PC-9 (cell line): ENCODE measurements at regions of chr4 and their contacts with region 1.

Region 1: GRCh38 chr4:781493-782216 is 44.3 kb downstream of the CPLX1 start:
- DNase-seq: peak; percentile 97 to 100
- H3K4me3 ChIP-seq: peak overlapping the region; percentile 90
- H3K27ac ChIP-seq: peak overlapping the region; percentile 92
- H3K4me1 ChIP-seq: peaks cover 24% of the 10 kb centered on the region
- H3K27me3 ChIP-seq: no peaks in the 10 kb centered on the region
- CTCF ChIP-seq: no peak

Region 2: GRCh38 chr4:828641-829271 is 47.1 kb after region 1 on chr4:
- CTCF ChIA-PET with region 1: no interaction called
- POLR2A ChIA-PET with region 1: interaction called, 11 read pairs
- intact Hi-C with region 1: loop called (anchors 10 kb)
- DNase-seq: peak in 1 of 2 experiments; percentile 21
- H3K4me3 ChIP-seq: no peak overlapping the region
- H3K27ac ChIP-seq: no peak overlapping the region
- H3K4me1 ChIP-seq: no peaks in the 10 kb centered on the region
- H3K27me3 ChIP-seq: peaks cover 6% of the 10 kb centered on the region; the same call in 1 of the 2 replicates
- CTCF ChIP-seq: 0 out of 2 replicates have a peak, but pooled peaks have one; percentile 36

Region 3: GRCh38 chr4:835148-836002 is 53.7 kb after region 1 on chr4:
- CTCF ChIA-PET with region 1: no interaction called
- POLR2A ChIA-PET with region 1: no interaction called
- intact Hi-C with region 1: loop called (anchors 10 kb)
- DNase-seq: peak; percentile 48 to 82
- H3K4me3 ChIP-seq: no peak overlapping the region
- H3K27ac ChIP-seq: no peak overlapping the region
- H3K4me1 ChIP-seq: no peaks in the 10 kb centered on the region
- H3K27me3 ChIP-seq: peaks cover 10% of the 10 kb centered on the region; the same call in 1 of the 2 replicates
- CTCF ChIP-seq: no peak

Region 4: DNA sequence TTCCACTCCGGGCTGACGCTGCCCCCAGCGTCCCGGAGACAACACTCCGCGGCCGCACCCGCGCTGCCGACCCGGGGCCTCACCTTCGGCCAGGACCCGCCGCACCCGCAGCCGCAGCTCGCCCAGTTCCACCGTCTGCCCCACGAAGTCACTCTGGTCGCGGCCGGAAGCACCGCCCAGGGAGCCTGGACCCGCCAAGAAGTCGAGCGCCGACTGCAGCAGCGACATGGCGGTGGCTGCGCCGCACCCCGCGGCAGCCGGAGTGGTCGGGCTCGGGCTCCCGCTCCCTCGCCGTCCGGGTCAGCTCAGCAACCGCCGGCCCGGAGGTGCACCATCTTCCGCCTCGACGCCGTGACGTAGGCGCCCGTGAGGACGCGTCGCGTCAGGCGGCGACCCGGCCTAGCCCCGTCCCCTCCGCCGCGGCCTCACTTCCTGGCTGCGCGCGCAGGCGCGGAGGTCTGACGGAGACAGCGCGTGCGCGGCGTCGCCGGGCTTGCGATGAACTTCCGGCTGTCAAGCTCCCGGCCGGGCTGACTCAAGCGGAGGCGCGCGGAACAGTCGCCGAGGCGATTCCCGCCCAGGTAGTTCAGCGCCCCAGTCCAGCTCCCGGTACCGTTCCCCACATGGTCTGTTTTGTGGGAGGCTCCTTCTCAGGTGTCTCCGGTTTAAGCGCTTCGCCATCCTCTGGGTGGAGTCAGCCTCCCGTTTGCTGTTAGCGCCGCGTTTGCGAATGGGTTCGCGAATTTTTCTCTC is 150.5 kb after region 1 on chr4 and contains the starts of genes GAK and TMEM175:
- CTCF ChIA-PET with region 1: no interaction called
- POLR2A ChIA-PET with region 1: interaction called, 3 read pairs
- intact Hi-C with region 1: loop called (anchors 1 kb)
- DNase-seq: peak; percentile 86 to 97
- H3K4me3 ChIP-seq: peak within 1 kb of the TSS; percentile 96
- H3K27ac ChIP-seq: peak within 1 kb of the TSS; percentile 24
- H3K4me1 ChIP-seq: peaks cover 30% of the 10 kb centered on the region
- H3K27me3 ChIP-seq: no peaks in the 10 kb centered on the region
- CTCF ChIP-seq: no peak
- total RNA-seq, gene GAK: 114 and 138 TPM in 2 replicates
- total RNA-seq, gene TMEM175: 13.5 and 20.2 TPM in 2 replicates

Region 5: DNA sequence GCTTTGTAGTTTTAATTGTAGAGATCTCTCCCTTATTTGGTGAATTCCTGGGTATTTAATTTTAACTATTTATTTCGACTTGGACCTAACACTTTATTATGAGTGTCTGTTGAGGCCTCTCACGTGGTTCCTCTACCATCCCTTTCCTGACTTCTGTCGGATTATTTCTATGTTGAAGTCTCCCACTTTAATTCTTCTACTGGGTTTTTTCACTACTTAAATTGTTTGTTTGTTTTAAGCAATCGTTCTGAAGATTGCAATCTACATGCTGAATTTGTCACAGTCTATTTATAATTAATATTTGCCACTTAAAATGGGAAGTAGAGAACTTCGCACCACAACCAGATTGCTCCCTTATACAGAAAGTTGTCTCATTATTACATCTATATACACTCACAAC is 645.4 kb after region 1 on chr4:
- CTCF ChIA-PET with region 1: no interaction called
- POLR2A ChIA-PET with region 1: no interaction called
- intact Hi-C with region 1: no loop called
- DNase-seq: no peak
- H3K4me3 ChIP-seq: no peak overlapping the region
- H3K27ac ChIP-seq: no peak overlapping the region
- H3K4me1 ChIP-seq: no peaks in the 10 kb centered on the region
- H3K27me3 ChIP-seq: peaks cover 48% of the 10 kb centered on the region
- CTCF ChIP-seq: no peak